ENCODE measurements at regions of chr22 and their contacts with region 1.

Region 1: DNA sequence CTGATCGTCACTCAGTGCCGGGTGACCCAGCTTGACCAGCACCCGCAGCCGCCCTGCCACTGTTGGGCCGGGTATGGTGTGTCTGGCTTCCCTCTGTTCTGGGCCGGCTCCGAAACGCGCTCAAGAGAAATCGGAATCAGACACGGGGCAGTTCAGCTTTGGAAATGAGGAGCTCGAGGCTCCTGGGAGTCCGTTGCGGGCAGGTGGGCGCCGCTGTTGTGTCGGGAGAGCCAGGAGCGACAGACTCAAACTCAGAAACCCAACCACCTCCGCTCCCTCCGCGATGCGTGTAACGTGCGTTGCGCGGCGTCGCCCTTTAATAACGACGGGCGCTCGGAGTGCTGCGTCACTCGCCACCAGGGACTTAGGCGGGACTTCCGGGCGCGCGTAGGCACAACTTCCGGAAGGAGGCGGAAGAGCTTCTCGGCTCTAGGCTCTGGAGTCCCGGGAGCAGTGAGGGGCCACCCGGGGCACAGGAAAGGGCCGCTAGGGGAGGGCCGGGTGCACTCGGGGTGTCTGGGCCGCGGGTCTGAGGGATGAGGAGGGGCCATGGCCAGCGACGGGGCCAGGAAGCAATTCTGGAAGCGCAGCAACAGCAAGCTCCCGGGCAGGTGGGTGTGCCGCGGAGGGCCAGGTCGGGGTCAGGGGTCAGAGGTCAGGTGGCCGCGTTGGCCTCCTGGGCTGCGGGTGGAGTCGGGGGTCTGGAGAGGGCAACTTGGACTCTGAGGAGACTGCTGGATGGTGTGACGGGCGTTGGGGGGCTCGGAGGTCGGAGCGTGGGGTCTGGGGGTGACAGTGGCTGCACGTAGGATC is at the start of gene TBC1D22A:
- DNase-seq: peak; percentile 89 to 95 (median 93)
- ATAC-seq: peak; percentile 93
- H3K4me3 ChIP-seq: peak within 1 kb of the TSS; percentile 99
- H3K4me3 Mint-ChIP-seq: peak within 1 kb of the TSS; percentile 97 to 100 (median 99)
- H3K27ac ChIP-seq: peak within 1 kb of the TSS; percentile 99
- H3K27ac Mint-ChIP-seq: peak within 1 kb of the TSS; percentile 97 to 100 (median 100)
- H3K4me1 ChIP-seq: peaks cover 28 to 31% of the 10 kb centered on the region in 2 donors
- H3K4me1 Mint-ChIP-seq: peaks cover 46 to 74% (median 63%) of the 10 kb centered on the region in 7 donors
- H3K27me3 ChIP-seq: no peaks in the 10 kb centered on the region
- H3K27me3 Mint-ChIP-seq: no peaks in the 10 kb centered on the region
- total RNA-seq, gene TBC1D22A: 37.5 to 50.1 (median 43.4) TPM

Region 2: GRCh38 chr22:46732041-46732379 is 30.4 kb before region 1 on chr22:
- CTCF ChIA-PET with region 1: interaction called, 3 read pairs
- POLR2A ChIA-PET with region 1: interaction called, 28 read pairs
- intact Hi-C with region 1: loop called in 1 of 2 experiments (anchors 1 kb)
- DNase-seq: no peak
- ATAC-seq: no peak
- H3K4me3 ChIP-seq: no peak overlapping the region
- H3K4me3 Mint-ChIP-seq: peak overlapping the region in 3 of 10 donors; percentile 47 to 60 (median 51)
- H3K27ac ChIP-seq: no peak overlapping the region
- H3K27ac Mint-ChIP-seq: peak overlapping the region in 6 of 9 donors; percentile 36 to 87 (median 75)
- H3K4me1 ChIP-seq: peaks cover 46% of the 10 kb centered on the region in 2 donors
- H3K4me1 Mint-ChIP-seq: peaks cover 42 to 75% (median 68%) of the 10 kb centered on the region in 7 donors
- H3K27me3 ChIP-seq: no peaks in the 10 kb centered on the region
- H3K27me3 Mint-ChIP-seq: no peaks in the 10 kb centered on the region

Region 3: DNA sequence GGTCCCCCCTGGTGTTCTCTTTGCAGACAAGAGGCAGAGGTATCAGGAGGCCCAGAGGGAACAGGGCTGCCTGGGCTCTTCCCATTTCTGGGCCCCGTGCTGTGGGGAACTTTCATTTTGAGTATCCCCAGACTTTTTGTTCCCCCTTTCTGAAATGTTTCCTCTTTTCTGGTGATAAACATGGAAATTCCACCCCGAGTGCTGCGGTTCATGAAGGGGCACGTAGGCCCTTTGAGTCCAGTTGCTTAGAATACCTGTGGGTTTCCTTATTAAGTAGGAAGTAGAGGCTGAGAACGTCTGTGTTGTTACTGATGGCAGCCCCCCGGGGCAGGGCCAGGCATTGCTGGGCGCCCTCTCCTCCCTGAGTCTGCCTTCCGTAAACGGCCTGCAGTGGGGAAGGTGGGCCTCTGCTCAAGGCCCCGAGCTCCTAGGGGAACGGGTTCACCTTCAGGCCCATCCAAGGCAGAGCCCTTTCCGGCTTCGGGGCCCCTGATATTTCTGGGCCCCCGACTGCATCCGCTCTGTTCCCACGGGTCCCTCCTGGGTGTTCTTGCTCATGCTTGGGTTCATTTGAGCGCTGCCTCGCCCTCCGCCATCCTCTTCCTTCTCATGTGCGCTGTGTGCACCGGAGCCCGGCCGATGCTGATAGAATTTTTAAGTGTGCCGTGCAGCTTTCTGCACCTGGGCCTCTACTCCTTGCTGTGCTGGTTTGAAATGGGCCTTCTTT is 12.0 kb after region 1 on chr22:
- CTCF ChIA-PET with region 1: interaction called, 8 read pairs
- POLR2A ChIA-PET with region 1: interaction called, 31 read pairs
- intact Hi-C with region 1: no loop called
- DNase-seq: no peak
- ATAC-seq: peak; percentile 70
- H3K4me3 ChIP-seq: peak overlapping the region; percentile 17
- H3K4me3 Mint-ChIP-seq: peak overlapping the region; percentile 60 to 84 (median 68)
- H3K27ac ChIP-seq: peak overlapping the region; percentile 70
- H3K27ac Mint-ChIP-seq: peak overlapping the region; percentile 53 to 95 (median 88)
- H3K4me1 ChIP-seq: peaks cover 37 to 50% of the 10 kb centered on the region in 2 donors
- H3K4me1 Mint-ChIP-seq: peaks cover 59 to 87% (median 70%) of the 10 kb centered on the region in 7 donors
- H3K27me3 ChIP-seq: no peaks in the 10 kb centered on the region
- H3K27me3 Mint-ChIP-seq: no peaks in the 10 kb centered on the region

Region 4: DNA sequence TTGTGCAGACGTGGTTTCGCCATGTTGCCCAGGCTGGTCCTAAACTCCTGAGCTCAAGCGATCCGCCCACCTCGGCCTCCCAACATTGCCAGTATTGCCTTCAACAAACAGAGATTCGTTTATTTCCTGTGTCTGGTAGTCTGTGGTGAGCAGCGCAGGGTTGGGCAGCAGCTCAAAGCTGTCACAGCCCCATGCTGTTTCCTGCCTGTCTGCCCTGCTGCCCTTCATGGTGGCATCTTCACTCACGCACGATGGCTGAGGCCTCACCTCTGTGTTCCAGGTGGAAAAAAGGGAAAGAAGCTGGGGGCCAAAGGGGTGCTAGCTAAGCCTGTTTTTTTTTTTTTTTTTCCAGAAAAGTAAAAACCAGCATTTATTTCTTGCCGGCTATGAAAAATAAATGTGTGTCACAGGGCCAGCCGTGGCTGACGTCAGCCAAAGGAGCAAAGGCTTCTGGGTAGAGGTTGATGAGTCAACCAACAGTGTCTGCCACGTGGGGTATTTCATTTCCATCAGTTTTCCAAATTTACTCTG is 28.8 kb after region 1 on chr22:
- CTCF ChIA-PET with region 1: interaction called, 13 read pairs
- POLR2A ChIA-PET with region 1: interaction called, 72 read pairs
- intact Hi-C with region 1: loop called (anchors 1 kb)
- DNase-seq: peak; percentile 51 to 90 (median 81)
- ATAC-seq: peak; percentile 97
- H3K4me3 ChIP-seq: peak overlapping the region; percentile 33
- H3K4me3 Mint-ChIP-seq: peak overlapping the region; percentile 54 to 90 (median 84)
- H3K27ac ChIP-seq: peak overlapping the region; percentile 81
- H3K27ac Mint-ChIP-seq: peak overlapping the region; percentile 99 to 100 (median 100)
- H3K4me1 ChIP-seq: peaks cover 30 to 35% of the 10 kb centered on the region in 2 donors
- H3K4me1 Mint-ChIP-seq: peaks cover 27 to 62% (median 49%) of the 10 kb centered on the region in 7 donors
- H3K27me3 ChIP-seq: no peaks in the 10 kb centered on the region
- H3K27me3 Mint-ChIP-seq: no peaks in the 10 kb centered on the region

Measured in naive thymus-derived CD4-positive, alpha-beta T cell (primary cell).